ENCODE measurements at regions of chr1 and their contacts with region 1.

Region 1: DNA sequence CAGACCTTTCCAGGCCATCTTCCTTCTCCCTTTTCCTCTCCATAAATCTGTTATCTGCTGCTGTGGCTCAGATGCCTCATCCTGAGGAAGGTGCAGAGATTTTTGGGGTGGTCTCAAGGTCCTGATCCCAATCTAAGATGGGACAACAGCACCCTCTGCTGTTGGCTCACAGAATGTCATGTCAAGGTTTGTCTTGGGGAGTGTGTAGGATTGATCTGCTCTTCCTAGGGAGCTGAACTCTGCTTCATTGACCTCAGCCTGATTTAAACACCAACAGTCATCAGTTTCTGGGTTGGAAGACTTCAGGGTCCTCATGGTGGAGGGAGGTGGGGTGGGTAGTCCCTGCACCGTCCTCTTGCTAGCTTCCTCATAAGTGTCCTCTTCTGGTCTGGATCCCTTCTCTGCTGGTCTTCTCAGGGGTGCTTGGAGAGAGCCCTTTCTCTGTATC is 62.8 kb upstream of the LAX1 start:
- DNase-seq: peak; percentile 73
- H3K4me3 ChIP-seq: no peak overlapping the region
- H3K27ac ChIP-seq: no peak overlapping the region
- H3K4me1 ChIP-seq: no peaks in the 10 kb centered on the region
- H3K27me3 ChIP-seq: no peaks in the 10 kb centered on the region
- CTCF ChIP-seq: peak; percentile 90

Region 2: GRCh38 chr1:202192770-202193613 is 1509.2 kb before region 1 on chr1:
- CTCF ChIA-PET with region 1: no interaction called
- POLR2A ChIA-PET with region 1: no interaction called
- intact Hi-C with region 1: no loop called
- DNase-seq: peak; percentile 59
- H3K4me3 ChIP-seq: no peak overlapping the region
- H3K27ac ChIP-seq: no peak overlapping the region
- H3K4me1 ChIP-seq: no peaks in the 10 kb centered on the region
- H3K27me3 ChIP-seq: peaks cover 39% of the 10 kb centered on the region
- CTCF ChIP-seq: peak; percentile 90

Region 3: GRCh38 chr1:203273206-203273868 is 428.8 kb before region 1 on chr1:
- CTCF ChIA-PET with region 1: no interaction called
- POLR2A ChIA-PET with region 1: no interaction called
- intact Hi-C with region 1: loop called (anchors 5 kb)
- DNase-seq: peak; percentile 87
- H3K4me3 ChIP-seq: no peak overlapping the region
- H3K27ac ChIP-seq: no peak overlapping the region
- H3K4me1 ChIP-seq: peaks cover 31% of the 10 kb centered on the region
- H3K27me3 ChIP-seq: no peaks in the 10 kb centered on the region
- CTCF ChIP-seq: peak; percentile 99

Region 4: DNA sequence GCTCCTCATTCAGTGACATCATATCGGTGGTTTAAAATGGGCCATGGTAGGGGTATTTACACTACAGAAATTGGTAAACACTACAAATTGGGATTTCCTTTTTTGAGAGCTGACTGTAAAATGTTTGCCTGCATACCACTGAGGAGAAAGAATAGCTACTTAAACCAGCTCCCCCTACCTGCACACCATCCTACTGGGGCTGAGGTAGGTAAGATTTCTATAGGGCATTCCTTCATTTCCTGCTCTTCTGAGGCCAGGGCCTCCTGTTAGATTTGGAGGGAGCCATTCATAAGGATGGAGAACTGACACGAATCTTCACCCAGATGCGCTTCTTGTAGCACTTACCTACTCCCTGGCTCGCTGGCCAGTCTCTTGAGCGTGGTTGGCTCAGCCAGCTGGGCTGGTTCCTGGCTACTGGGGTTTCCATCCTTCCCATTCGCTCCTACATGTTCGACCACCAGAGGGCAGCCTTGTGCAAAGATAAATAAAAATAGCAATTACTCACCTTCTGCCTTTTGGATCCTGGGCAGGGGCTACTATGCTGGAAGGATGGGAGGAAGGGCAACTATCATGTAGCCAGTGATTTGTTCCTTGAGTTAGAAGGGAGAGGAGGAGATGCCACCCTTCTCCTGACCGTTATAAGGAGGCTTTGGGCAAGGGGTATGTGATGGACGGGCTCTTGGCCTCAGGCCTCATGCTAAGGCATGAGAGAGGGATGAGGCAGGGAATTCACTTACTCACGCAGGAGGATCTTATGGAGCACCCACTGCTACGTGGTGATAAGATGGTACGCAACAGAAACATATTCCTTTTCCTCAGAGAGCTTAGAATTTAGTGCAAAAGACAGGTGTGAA is 197.5 kb before region 1 on chr1:
- CTCF ChIA-PET with region 1: interaction called, 26 read pairs
- POLR2A ChIA-PET with region 1: no interaction called
- intact Hi-C with region 1: loop called (anchors 1 kb)
- DNase-seq: peak; percentile 83
- H3K4me3 ChIP-seq: no peak overlapping the region
- H3K27ac ChIP-seq: no peak overlapping the region
- H3K4me1 ChIP-seq: no peaks in the 10 kb centered on the region
- H3K27me3 ChIP-seq: no peaks in the 10 kb centered on the region
- CTCF ChIP-seq: peak; percentile 92

Region 5: GRCh38 chr1:203898458-203899244 is 196.5 kb after region 1 on chr1:
- CTCF ChIA-PET with region 1: no interaction called
- POLR2A ChIA-PET with region 1: no interaction called
- intact Hi-C with region 1: no loop called
- DNase-seq: no peak
- H3K4me3 ChIP-seq: no peak overlapping the region
- H3K27ac ChIP-seq: no peak overlapping the region
- H3K4me1 ChIP-seq: no peaks in the 10 kb centered on the region
- H3K27me3 ChIP-seq: no peaks in the 10 kb centered on the region
- CTCF ChIP-seq: no peak